PC-9 (cell line): ENCODE measurements at regions of chr19 and their contacts with region 1.

Region 1: GRCh38 chr19:3984908-3985642 is at the start of gene EEF2:
- DNase-seq: peak; percentile 57 to 76
- H3K4me3 ChIP-seq: peak within 1 kb of the TSS; percentile 91
- H3K27ac ChIP-seq: peak within 1 kb of the TSS; percentile 95
- H3K4me1 ChIP-seq: peaks cover 23% of the 10 kb centered on the region
- H3K27me3 ChIP-seq: no peaks in the 10 kb centered on the region
- CTCF ChIP-seq: no peak
- total RNA-seq, gene EEF2: 1,471 and 1,742 TPM in 2 replicates

Region 2: GRCh38 chr19:3830621-3831589 is 154.2 kb before region 1 on chr19:
- CTCF ChIA-PET with region 1: no interaction called
- POLR2A ChIA-PET with region 1: no interaction called
- intact Hi-C with region 1: no loop called
- DNase-seq: no peak
- H3K4me3 ChIP-seq: no peak overlapping the region
- H3K27ac ChIP-seq: no peak overlapping the region
- H3K4me1 ChIP-seq: peaks cover 8% of the 10 kb centered on the region
- H3K27me3 ChIP-seq: no peaks in the 10 kb centered on the region
- CTCF ChIP-seq: no peak

Region 3: DNA sequence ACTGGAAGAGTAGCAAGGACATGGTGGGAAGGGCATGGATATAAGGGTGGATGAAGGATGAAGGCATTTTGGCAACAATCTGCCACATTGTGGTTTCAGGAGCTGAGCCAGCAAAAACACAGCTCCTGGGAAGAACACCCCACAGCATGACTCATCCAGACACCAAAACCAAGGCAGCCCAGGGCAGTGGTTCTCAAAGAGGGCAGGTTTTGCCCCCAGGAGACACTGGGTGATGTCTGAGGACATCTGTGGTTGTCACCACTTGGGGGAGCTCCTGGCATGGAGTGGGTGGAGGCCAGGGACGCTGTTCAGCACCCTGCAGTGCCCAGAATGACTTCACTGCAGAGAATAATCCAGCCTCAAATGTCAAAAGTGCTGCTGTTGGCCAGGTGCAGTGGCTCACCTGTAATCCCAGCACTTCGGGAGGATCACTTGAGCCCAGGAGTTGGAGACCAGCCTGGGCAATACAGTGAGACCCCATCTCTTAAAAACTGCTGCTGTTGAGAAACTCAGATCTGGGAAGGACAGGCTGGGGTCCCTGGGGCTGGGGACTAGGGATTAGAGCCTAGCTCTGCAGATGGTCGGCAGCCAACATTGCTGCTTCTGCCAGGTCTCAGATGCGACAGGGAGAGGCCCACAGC is 132.3 kb before region 1 on chr19:
- CTCF ChIA-PET with region 1: interaction called, 5 read pairs
- POLR2A ChIA-PET with region 1: no interaction called
- intact Hi-C with region 1: loop called (anchors 2 kb)
- DNase-seq: peak; percentile 76 to 85
- H3K4me3 ChIP-seq: no peak overlapping the region
- H3K27ac ChIP-seq: no peak overlapping the region
- H3K4me1 ChIP-seq: 0 out of 2 replicates have a peak, but pooled peaks cover 6% of the 10 kb centered on the region
- H3K27me3 ChIP-seq: no peaks in the 10 kb centered on the region
- CTCF ChIP-seq: peak; percentile 69

Region 4: DNA sequence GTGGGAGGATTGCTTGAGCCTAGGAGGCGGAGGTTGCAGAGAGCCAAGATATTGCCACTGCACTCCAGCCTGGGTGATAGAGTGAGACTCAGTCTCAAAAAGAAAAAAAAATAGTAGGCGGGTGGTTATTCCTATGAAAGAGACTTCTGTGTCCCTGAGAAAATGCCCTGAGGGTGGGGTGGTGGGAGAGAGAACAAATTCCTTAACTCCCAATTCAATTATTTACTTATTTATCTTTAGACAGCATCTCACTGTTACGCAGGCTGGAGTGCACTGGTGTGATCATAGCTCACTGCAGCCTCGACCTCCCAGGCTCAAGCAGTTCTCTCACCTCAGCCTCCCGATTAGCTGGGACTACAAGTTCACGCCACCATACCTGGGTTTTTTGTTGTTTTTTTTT is 10.6 kb after region 1 on chr19:
- CTCF ChIA-PET with region 1: interaction called, 19 read pairs
- POLR2A ChIA-PET with region 1: no interaction called
- intact Hi-C with region 1: no loop called
- DNase-seq: peak in 1 of 2 experiments; percentile 34
- H3K4me3 ChIP-seq: no peak overlapping the region
- H3K27ac ChIP-seq: no peak overlapping the region
- H3K4me1 ChIP-seq: no peaks in the 10 kb centered on the region
- H3K27me3 ChIP-seq: no peaks in the 10 kb centered on the region
- CTCF ChIP-seq: no peak

Region 5: DNA sequence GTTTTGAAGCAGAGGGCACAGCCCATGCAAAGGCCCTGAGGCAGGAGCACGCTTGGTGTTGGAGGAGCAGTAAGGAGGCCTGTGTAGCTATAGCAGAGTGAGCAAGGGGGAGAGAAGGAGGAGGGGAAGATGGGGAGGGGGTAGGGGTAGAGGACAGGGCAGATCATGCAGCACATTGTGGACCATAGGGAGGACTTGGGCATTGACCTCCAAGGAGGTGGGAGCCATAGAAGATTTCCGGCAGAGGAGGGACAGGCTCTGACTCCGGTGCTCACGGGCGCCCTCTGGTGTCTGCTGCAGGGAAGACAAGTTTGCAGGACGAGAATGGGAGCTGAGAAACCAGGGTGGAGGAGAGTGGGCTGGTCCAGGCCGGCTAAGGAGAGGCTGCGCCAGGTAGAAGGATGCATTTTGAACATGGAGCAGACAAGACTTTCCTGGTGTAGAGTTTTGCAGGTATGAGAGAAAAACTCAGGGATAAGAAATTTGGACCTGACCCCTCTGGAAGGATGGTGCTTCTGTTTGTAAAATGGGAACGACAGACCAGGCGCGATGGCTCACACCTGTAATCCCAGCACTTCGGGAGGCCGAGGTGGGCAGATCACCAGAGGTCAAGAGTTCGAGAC is 154.7 kb after region 1 on chr19:
- CTCF ChIA-PET with region 1: no interaction called
- POLR2A ChIA-PET with region 1: no interaction called
- intact Hi-C with region 1: loop called (anchors 5 kb)
- DNase-seq: peak; percentile 52 to 78
- H3K4me3 ChIP-seq: no peak overlapping the region
- H3K27ac ChIP-seq: no peak overlapping the region
- H3K4me1 ChIP-seq: peaks cover 3% of the 10 kb centered on the region
- H3K27me3 ChIP-seq: no peaks in the 10 kb centered on the region
- CTCF ChIP-seq: peak; percentile 78

Region 6: GRCh38 chr19:4375164-4376027 is 390.3 kb after region 1 on chr19:
- CTCF ChIA-PET with region 1: no interaction called
- POLR2A ChIA-PET with region 1: no interaction called
- intact Hi-C with region 1: loop called (anchors 5 kb)
- DNase-seq: peak; percentile 92 to 97
- H3K4me3 ChIP-seq: peak overlapping the region; percentile 42; the same call in 1 of the 2 replicates
- H3K27ac ChIP-seq: peak overlapping the region; percentile 95
- H3K4me1 ChIP-seq: peaks cover 68% of the 10 kb centered on the region
- H3K27me3 ChIP-seq: no peaks in the 10 kb centered on the region
- CTCF ChIP-seq: no peak; the same call in 1 of the 2 replicates